GM10248 (cell line): ENCODE measurements at regions of chr12 and their contacts with region 1.

Region 1: GRCh38 chr12:27226407-27226929 is 17.6 kb upstream of the STK38L start:
- DNase-seq: no peak
- CTCF ChIP-seq: no peak

Region 2: DNA sequence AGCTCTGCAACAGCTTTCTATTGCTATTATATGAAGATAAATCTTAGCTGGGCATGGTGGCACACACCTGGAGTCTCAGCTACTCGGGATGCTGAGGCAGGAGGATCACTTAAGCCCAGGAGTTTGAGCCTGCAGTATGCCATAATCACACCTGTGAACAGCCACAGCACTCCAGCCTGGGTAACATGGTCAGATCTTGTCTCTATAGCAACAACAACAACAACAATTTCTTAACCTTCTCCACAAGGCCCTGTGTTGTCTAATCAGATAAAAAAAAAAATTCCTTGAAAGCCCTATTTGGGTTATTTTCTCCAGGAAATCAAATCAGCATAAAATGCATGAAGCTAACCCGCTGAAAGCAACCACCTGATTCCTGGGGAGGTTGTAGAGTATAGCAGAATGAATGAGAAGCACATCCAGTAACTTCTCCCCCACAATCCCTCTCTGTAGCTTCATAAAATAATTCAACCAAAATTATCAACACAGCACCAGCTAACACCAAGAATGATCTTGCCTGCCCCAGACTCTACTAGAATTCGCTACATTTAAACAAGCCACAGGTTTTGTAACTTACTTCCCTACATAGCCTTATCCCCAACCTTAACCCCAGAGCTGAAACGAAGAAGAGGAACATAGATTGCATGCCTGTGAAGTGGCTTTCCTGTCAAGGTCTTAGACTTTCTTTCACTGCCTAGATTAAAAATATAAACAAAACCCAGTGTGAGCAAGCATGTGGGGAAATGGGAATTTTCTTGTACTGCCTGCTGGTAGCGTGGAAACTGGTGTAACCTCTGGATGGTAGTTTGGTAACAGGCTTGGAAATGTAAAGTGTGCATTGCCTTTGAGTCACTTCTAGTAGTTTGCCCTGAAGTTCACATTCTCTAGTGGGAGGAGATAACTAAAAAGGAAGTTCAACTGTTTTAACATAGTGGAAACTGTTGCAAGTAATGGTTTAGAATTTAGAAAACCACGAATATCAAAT is 11.6 kb after region 1 on chr12:
- CTCF ChIA-PET with region 1: interaction called, 16 read pairs
- POLR2A ChIA-PET with region 1: interaction called, 6 read pairs
- DNase-seq: no peak
- CTCF ChIP-seq: no peak

Region 3: DNA sequence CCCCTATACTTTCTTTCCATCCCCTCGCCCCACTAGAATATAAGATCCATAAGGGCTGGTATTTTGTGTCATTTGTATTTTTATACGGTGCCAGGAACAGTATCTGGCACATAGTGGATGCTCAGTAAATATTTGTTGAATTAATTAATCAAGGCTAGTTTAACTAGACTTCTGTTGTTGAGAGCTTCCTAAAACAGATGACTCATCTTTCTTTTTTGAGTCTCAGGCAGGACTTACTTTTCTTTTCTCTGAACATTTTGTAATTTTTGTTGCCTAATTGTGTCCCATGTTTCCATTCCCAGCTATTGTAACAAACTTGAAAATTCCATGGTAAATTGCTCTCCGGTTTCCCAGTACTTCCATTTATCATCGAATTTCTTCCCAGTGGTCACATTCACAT is 34.3 kb after region 1 on chr12:
- CTCF ChIA-PET with region 1: no interaction called
- POLR2A ChIA-PET with region 1: no interaction called
- DNase-seq: no peak
- CTCF ChIP-seq: no peak

Region 4: GRCh38 chr12:27400856-27401354 is 174.4 kb after region 1 on chr12:
- CTCF ChIA-PET with region 1: no interaction called
- POLR2A ChIA-PET with region 1: no interaction called
- DNase-seq: no peak
- CTCF ChIP-seq: no peak